GM12878 (cell line): ENCODE measurements at regions of chr18 and their contacts with region 1.

Region 1: DNA sequence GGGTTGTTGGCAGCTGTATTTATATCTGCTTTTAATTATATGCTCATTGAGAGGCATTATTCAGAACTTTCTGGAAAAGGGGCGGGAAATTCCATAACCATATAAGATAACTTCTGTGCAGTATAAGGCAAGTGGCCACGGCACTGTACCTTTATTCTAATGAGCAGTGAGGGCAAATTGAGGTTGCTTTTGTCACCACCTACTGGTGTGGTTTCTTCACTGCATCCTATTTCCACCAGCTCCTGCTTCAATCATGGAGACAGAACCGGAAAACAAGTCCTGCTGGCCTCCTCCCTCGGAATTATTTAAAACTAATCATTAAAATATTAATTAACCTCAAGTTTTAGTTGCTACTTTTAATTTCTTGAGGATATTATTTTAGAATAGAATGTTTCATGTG is 759.4 kb downstream of the CBLN2 start:
- DNase-seq: no peak
- ATAC-seq: peak; percentile 57
- H3K4me3 ChIP-seq: no peak overlapping the region
- H3K27ac ChIP-seq: no peak overlapping the region
- H3K4me1 ChIP-seq: no peaks in the 10 kb centered on the region
- H3K27me3 ChIP-seq: no peaks in the 10 kb centered on the region
- CTCF ChIP-seq: peak in 2 of 3 experiments; percentile 42 to 53; a peak in 3 of 6 replicates
- EP300 ChIP-seq: no peak
- POLR2A ChIP-seq: no peak
- RAD21 ChIP-seq: no peak

Region 2: DNA sequence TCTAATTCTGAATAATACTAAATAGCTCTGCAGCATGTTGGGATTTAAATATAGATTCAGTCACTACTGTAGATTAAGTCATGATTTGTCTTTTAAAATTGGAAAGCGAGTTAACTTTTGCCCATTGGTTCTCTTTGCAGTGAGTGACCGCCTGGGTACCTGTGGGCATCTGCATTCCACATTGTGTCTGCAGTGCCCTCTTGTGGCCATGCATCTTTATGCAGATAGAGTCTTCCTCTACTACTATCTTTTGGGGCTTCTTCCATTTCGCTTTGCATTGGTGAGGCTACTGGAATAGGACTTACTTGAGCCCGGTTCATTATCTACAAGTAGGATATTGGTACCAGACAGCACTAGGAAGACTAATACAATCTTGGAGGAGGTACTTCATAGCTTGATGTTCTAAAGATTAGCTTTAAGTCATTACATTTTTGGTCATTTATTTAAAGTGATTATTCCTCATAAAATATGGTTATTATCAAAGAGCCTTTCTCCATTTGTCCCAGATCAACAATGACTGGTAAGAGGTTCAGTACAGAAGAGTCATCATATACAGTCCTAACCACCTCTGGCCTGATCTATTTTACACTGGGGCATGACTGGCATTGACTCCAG is 1292.9 kb before region 1 on chr18:
- CTCF ChIA-PET with region 1: no interaction called
- POLR2A ChIA-PET with region 1: no interaction called
- RAD21 ChIA-PET with region 1: no interaction called
- SMC1A ChIA-PET with region 1: no interaction called
- in situ Hi-C with region 1: no loop called
- intact Hi-C with region 1: loop called (anchors 10 kb)
- DNase-seq: no peak
- ATAC-seq: peak; percentile 96
- H3K4me3 ChIP-seq: no peak overlapping the region
- H3K27ac ChIP-seq: no peak overlapping the region
- H3K4me1 ChIP-seq: no peaks in the 10 kb centered on the region
- H3K27me3 ChIP-seq: no peaks in the 10 kb centered on the region
- CTCF ChIP-seq: peak; percentile 68 to 83 (median 80)
- EP300 ChIP-seq: no peak
- POLR2A ChIP-seq: no peak
- RAD21 ChIP-seq: peak; percentile 41; the same call in 1 of the 2 replicates

Region 3: DNA sequence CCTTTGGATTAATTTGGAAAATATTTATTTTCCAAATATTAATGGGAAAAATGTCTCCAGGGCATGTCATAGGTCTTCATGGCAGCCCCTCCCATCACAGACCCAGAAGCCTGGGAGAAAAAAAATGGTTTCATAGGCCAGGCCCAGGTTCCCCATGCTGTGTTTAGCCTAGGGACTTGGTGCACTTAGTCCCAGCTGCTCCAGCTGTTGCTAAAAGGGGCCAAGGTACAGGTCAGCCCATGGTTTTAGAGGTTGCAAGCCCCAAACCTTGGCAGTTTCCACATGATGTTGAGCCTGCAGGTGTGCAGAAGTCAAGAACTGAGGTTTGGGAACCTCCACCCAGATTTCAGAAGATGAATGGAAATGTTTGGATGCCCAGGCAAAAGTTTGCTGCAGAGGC is 1186.4 kb before region 1 on chr18:
- CTCF ChIA-PET with region 1: no interaction called
- POLR2A ChIA-PET with region 1: no interaction called
- RAD21 ChIA-PET with region 1: no interaction called
- SMC1A ChIA-PET with region 1: no interaction called
- in situ Hi-C with region 1: no loop called
- intact Hi-C with region 1: loop called (anchors 5 kb)
- DNase-seq: no peak
- ATAC-seq: no peak
- H3K4me3 ChIP-seq: no peak overlapping the region
- H3K27ac ChIP-seq: no peak overlapping the region
- H3K4me1 ChIP-seq: no peaks in the 10 kb centered on the region
- H3K27me3 ChIP-seq: no peaks in the 10 kb centered on the region
- CTCF ChIP-seq: no peak
- EP300 ChIP-seq: no peak
- POLR2A ChIP-seq: no peak
- RAD21 ChIP-seq: no peak

Region 4: DNA sequence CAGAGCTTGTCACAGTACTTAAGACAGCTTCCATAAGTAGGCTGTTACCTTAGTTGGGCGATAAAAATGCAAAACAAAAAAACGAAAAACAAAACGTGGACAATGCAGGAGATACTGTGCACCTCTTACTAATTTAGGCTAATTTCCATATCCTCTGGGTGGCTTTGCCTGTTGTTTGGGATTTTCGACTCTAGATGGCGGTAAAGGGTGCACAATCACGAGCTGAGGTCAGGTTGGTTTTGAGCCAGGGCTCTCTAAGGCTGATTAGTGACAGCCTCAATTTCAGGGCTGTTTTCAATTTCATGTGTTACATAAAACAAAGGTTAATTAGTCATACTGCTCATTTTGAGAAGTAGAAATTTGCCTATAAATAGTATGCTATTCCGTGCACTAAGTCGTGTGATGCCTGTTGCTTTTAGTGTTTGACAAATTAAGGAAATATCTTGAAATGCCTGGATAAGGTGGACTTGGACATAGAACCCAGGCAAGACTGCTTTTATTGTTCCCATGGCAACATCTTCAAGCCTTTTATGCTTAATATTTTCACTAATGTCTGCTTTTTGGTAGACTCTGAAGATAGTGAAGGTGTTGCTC is 1002.8 kb before region 1 on chr18:
- CTCF ChIA-PET with region 1: interaction called, 4 read pairs
- POLR2A ChIA-PET with region 1: no interaction called
- RAD21 ChIA-PET with region 1: interaction called, 6 read pairs
- SMC1A ChIA-PET with region 1: no interaction called
- in situ Hi-C with region 1: no loop called
- intact Hi-C with region 1: loop called (anchors 5 kb)
- DNase-seq: peak; percentile 15
- ATAC-seq: peak; percentile 91
- H3K4me3 ChIP-seq: no peak overlapping the region
- H3K27ac ChIP-seq: no peak overlapping the region
- H3K4me1 ChIP-seq: no peaks in the 10 kb centered on the region
- H3K27me3 ChIP-seq: no peaks in the 10 kb centered on the region
- CTCF ChIP-seq: peak; percentile 65 to 70 (median 67)
- EP300 ChIP-seq: no peak
- POLR2A ChIP-seq: no peak
- RAD21 ChIP-seq: peak; percentile 67

Region 5: DNA sequence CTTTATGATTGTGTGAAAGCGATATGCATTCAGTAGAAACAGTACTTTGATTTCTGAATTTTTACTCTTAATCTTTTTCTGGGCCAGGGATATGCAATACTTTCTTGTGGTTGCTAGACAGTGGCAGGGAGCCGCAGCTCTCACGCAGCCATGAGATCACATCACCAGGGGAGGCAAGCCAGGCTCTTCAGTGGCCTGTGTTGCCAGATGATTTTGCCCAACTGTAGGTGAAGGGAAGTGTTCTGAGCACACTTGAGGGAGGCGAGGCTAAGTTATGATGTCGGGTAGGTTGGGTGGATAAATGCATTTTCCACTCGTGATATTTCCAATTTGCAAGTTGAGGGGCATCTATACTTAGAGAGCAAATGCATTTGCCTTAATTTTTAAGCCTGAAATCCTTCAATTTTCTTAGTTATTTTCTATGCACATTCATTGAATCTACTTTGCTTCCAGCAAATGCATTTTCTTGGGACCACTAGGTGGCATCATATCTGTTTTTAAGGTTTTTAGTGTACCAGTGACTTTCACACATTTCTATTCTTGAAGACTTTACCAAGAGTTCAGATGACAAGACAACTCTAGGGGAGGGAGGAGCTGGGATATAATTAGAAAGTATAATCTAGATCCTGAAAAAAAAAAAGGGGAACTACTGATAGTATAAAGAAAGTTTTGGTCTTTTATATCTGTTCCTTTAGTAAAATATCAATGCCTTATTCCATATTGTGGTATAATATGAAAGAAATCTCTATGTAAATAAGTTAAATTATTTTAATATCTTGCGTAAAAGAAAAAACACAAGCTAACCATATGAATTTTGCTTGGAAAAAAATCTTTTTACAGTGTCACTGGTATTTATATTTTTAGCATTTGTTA is 852.6 kb before region 1 on chr18:
- CTCF ChIA-PET with region 1: no interaction called
- POLR2A ChIA-PET with region 1: no interaction called
- RAD21 ChIA-PET with region 1: no interaction called
- SMC1A ChIA-PET with region 1: no interaction called
- in situ Hi-C with region 1: no loop called
- intact Hi-C with region 1: loop called (anchors 2 kb)
- DNase-seq: no peak
- ATAC-seq: peak; percentile 47; the same call in 1 of the 3 replicates
- H3K4me3 ChIP-seq: no peak overlapping the region
- H3K27ac ChIP-seq: no peak overlapping the region
- H3K4me1 ChIP-seq: no peaks in the 10 kb centered on the region
- H3K27me3 ChIP-seq: no peaks in the 10 kb centered on the region
- CTCF ChIP-seq: peak; percentile 27 to 55 (median 52); a peak in 5 of 6 replicates
- EP300 ChIP-seq: no peak
- POLR2A ChIP-seq: no peak
- RAD21 ChIP-seq: peak; percentile 60

Region 6: GRCh38 chr18:71398531-71398930 is 386.2 kb before region 1 on chr18:
- CTCF ChIA-PET with region 1: interaction called, 12 read pairs
- POLR2A ChIA-PET with region 1: no interaction called
- RAD21 ChIA-PET with region 1: interaction called, 4 read pairs
- SMC1A ChIA-PET with region 1: interaction called, 5 read pairs
- in situ Hi-C with region 1: no loop called
- intact Hi-C with region 1: loop called (anchors 10 kb)
- DNase-seq: no peak
- ATAC-seq: no peak; the same call in 2 of the 3 replicates
- H3K4me3 ChIP-seq: no peak overlapping the region
- H3K27ac ChIP-seq: no peak overlapping the region
- H3K4me1 ChIP-seq: no peaks in the 10 kb centered on the region
- H3K27me3 ChIP-seq: no peaks in the 10 kb centered on the region
- CTCF ChIP-seq: peak in 1 of 3 experiments; percentile 30; a peak in 1 of 6 replicates
- EP300 ChIP-seq: no peak
- POLR2A ChIP-seq: no peak
- RAD21 ChIP-seq: no peak

Region 7: DNA sequence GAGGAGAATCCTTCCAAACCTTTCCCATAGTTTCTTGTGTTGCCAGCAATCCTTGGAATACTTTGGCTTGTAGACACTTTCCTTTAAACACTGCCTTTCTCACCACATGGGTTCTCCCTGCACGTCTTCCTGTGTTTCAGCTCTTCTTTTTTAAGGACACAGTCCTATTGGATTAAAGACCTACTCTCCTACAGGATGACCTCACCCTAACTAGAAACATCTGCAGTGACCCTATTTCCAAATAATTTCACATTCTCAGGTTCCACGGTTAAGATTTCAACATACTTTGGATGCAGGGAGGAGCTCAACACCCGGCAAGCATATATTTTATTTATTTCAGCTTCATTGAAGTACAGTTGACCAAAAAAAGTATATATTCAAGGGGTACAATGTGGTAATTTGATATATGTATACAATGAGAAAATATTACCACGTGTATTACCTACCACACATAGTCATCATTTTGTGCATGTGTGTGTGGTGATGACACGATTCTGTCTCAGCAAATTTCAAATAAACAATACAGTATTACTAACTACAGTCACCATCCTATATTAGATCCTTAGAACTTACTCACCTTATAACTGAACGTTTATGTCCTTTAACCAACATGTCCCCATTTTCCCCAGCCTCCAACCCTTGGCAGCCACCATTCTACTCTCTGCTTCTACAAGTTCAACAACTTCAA is 14.4 kb after region 1 on chr18:
- CTCF ChIA-PET with region 1: interaction called, 14 read pairs
- POLR2A ChIA-PET with region 1: no interaction called
- RAD21 ChIA-PET with region 1: no interaction called
- SMC1A ChIA-PET with region 1: no interaction called
- in situ Hi-C with region 1: no loop called
- intact Hi-C with region 1: no loop called
- DNase-seq: no peak
- ATAC-seq: no peak
- H3K4me3 ChIP-seq: no peak overlapping the region
- H3K27ac ChIP-seq: no peak overlapping the region
- H3K4me1 ChIP-seq: no peaks in the 10 kb centered on the region
- H3K27me3 ChIP-seq: no peaks in the 10 kb centered on the region
- CTCF ChIP-seq: no peak
- EP300 ChIP-seq: no peak
- POLR2A ChIP-seq: no peak
- RAD21 ChIP-seq: no peak